ENCODE measurements at regions of chr1 and their contacts with region 1.

Region 1: DNA sequence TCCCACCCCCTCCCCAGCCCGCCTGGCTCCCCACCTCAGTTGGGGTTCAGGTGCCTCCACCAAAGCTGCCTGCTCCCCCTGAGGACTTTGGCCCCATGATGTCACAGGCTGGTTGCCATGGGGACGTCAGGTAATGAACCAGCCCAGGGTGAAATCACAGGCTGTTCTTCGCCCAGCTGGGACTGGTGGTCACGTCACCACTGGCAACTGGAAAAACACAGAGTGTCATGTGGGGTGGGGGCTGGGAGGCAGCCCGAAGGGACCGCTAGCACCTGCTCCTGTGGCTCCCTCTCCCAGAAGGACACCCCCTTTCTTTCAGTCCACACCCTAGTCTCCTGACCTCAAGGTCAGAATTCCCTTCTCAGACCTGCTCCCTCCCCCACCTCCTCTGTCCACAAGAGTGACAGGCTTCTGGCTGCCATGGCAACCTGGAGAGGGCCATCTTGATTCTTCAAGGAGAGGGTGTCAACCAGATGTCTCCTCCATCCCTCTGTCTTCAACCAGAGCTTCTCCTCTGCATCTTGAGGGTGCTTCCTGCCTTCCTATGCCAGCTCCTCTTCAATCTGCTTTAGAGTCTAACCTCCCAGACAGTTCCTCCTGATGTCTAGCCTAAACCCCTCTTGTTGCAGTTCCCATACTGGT is 6.2 kb downstream of the FAM131C start:
- DNase-seq: no peak

Region 2: DNA sequence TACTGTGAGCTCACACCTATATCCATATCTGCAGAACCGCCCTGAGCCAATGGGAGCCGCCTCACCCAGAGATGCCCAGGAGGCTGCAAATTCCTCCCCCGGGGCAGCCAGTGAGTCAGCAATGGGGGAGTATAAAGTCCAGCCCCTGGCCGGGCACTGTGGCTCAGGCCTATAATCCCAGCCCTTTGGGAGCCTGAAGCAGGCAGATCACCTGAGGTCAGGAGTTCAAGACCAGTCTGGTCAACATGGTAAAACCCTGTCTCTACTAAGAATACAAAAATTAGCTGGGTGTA is 28.7 kb before region 1 on chr1:
- intact Hi-C with region 1: loop called (anchors 1 kb)
- DNase-seq: no peak

Measured in cardiac septum (tissue), 1 donor.